ENCODE measurements at regions of chr12 and their contacts with region 1.

Region 1: GRCh38 chr12:8870586-8870985 is 43.7 kb upstream of the PHC1 start:
- DNase-seq: peak in 1 of 2 donors; percentile 3
- H3K4me3 ChIP-seq: no peak overlapping the region
- CTCF ChIP-seq: no peak
- POLR2A ChIP-seq: no peak

Region 2: DNA sequence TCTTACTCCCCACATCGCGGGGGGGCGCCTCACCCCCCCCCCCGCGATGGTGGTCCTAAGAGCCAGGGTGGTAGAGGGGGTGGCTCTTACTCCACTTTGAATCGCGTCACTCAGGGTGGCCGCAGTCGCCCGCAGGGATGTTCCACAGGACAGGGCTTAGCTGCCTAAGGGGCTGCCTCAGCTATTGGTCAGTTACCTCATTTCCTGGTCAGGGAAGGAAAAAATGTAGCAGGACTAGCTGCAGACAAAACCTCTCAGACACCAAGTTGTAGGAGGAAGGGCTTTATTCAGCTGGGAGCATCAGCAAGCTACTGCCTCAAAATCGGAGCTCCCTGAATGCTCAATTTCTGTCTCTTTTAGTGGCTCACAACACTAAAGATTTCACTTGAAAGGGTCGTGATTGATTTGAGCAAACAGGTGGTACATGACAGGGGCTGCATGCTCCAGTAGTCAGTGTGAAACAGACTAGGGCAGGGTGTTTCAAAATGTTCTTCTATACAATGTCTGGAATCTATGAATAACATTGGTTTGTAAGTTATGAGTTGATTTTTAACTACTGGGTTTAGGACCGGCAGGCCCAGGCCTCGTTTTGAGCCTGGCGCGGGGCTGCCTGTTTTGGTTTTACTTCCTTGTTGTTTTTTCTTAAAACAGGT is 421.2 kb before region 1 on chr12:
- intact Hi-C with region 1: no loop called
- DNase-seq: no peak
- H3K4me3 ChIP-seq: no peak overlapping the region
- CTCF ChIP-seq: no peak
- POLR2A ChIP-seq: no peak

Region 3: GRCh38 chr12:8572507-8572906 is 298.1 kb before region 1 on chr12:
- intact Hi-C with region 1: loop called (anchors 10 kb)
- DNase-seq: no peak
- H3K4me3 ChIP-seq: no peak overlapping the region
- CTCF ChIP-seq: no peak
- POLR2A ChIP-seq: no peak